ENCODE measurements at regions of chr3 and their contacts with region 1.

Region 1: DNA sequence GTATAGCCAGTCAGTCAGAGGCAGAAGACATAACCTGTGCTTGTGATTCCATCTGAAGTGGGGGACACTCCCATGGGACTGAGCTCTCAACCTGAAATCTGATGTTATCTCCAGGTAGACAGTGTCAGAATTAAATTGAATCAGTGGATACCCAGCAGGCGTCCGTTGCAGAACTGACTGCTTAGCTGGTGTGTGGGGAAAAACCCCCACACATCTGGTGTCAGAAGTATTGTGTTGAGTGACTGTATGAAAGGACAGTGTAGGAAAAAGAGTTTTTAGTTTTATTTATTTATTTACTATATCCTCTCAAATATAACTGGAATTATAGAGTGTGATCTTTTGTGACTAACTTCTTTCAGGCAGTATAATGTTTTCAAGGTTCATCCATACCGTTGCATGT is 10.4 kb downstream of the KPNA4 start:
- DNase-seq: no peak
- ATAC-seq: peak; percentile 46
- H3K4me3 ChIP-seq: no peak overlapping the region
- H3K27ac ChIP-seq: no peak overlapping the region
- H3K4me1 ChIP-seq: no peaks in the 10 kb centered on the region
- H3K27me3 ChIP-seq: no peaks in the 10 kb centered on the region
- CTCF ChIP-seq: no peak
- EP300 ChIP-seq: no peak
- POLR2A ChIP-seq: no peak
- RAD21 ChIP-seq: no peak

Region 2: GRCh38 chr3:160544844-160545503 is 10.0 kb before region 1 on chr3:
- CTCF ChIA-PET with region 1: interaction called, 10 read pairs
- POLR2A ChIA-PET with region 1: interaction called, 6 read pairs
- RAD21 ChIA-PET with region 1: no interaction called
- SMC1A ChIA-PET with region 1: interaction called, 3 read pairs
- in situ Hi-C with region 1: no loop called
- intact Hi-C with region 1: no loop called
- DNase-seq: no peak
- ATAC-seq: peak; percentile 34; the same call in 2 of the 3 replicates
- H3K4me3 ChIP-seq: no peak overlapping the region
- H3K27ac ChIP-seq: 0 out of 2 replicates have a peak overlapping the region, but pooled peaks have one; percentile 14
- H3K4me1 ChIP-seq: peaks cover 25% of the 10 kb centered on the region
- H3K27me3 ChIP-seq: no peaks in the 10 kb centered on the region
- CTCF ChIP-seq: no peak
- EP300 ChIP-seq: no peak
- POLR2A ChIP-seq: no peak
- RAD21 ChIP-seq: no peak

Region 3: GRCh38 chr3:160565442-160566403 is 10.7 kb after region 1 on chr3 and contains the start of gene KPNA4:
- CTCF ChIA-PET with region 1: interaction called, 5 read pairs
- POLR2A ChIA-PET with region 1: interaction called, 18 read pairs
- RAD21 ChIA-PET with region 1: no interaction called
- SMC1A ChIA-PET with region 1: interaction called, 8 read pairs
- in situ Hi-C with region 1: no loop called
- intact Hi-C with region 1: no loop called
- DNase-seq: peak; percentile 88
- ATAC-seq: peak; percentile 92
- H3K4me3 ChIP-seq: peak within 1 kb of the TSS; percentile 99
- H3K27ac ChIP-seq: peak within 1 kb of the TSS; percentile 83
- H3K4me1 ChIP-seq: peaks cover 7% of the 10 kb centered on the region; the same call in 1 of the 2 replicates
- H3K27me3 ChIP-seq: no peaks in the 10 kb centered on the region
- CTCF ChIP-seq: no peak
- EP300 ChIP-seq: no peak
- POLR2A ChIP-seq: peak; percentile 96
- RAD21 ChIP-seq: no peak
- polyA plus RNA-seq, gene KPNA4: 9.9 to 15.8 TPM